Sciatic nerve (tissue), 2 donors: ENCODE measurements at regions of chr1 and their contacts with region 1.

Region 1: DNA sequence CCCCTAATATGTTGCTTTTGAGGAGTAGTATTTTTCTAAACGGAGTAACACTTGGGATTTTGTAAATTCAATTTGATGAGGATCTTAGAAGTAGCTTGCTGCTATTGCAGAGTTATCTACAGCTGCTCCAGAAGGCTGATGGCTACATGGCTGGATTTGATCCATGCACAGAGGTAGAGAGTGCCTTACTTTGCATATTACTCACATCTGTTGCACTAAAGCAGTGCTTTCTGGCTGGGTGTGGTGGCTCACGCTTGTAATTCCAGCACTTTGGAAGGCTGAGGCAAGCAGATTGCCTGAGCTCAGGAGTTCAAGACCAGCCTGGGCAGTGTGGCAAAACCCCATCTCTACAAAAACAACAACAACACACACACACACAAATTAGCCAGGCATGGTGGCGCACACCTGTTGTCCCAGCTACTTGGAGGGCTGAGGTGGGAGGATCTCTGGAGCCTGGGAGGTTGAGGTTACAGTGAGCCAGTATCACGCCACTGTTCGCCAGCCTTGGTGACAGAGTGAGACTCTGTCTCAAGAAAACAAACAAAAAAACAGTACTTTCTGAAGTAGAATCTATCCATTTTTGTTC is 24.6 kb downstream of the RALGPS2 start:
- DNase-seq: no peak
- ATAC-seq: no peak

Region 2: GRCh38 chr1:178541829-178542559 is 207.7 kb before region 1 on chr1:
- intact Hi-C with region 1: loop called (anchors 2 kb)
- DNase-seq: peak; percentile 69
- ATAC-seq: peak; percentile 70